CD8-positive, alpha-beta T cell (primary cell): ENCODE measurements at regions of chr5 and their contacts with region 1.

Region 1: GRCh38 chr5:139560752-139561654 is at the start of gene UBE2D2:
- DNase-seq: peak; percentile 96 to 99 (median 97)
- ATAC-seq: peak; percentile 84
- H3K4me3 ChIP-seq: peak within 1 kb of the TSS; percentile 84 to 91
- H3K4me3 Mint-ChIP-seq: peak within 1 kb of the TSS; percentile 93
- H3K27ac ChIP-seq: peak within 1 kb of the TSS; percentile 87 to 89
- H3K27ac Mint-ChIP-seq: peak within 1 kb of the TSS; percentile 97
- H3K4me1 ChIP-seq: peaks cover 30% of the 10 kb centered on the region
- H3K4me1 Mint-ChIP-seq: peaks cover 35% of the 10 kb centered on the region
- H3K27me3 ChIP-seq: no peaks in the 10 kb centered on the region
- H3K27me3 Mint-ChIP-seq: no peaks in the 10 kb centered on the region
- CTCF ChIP-seq: no peak
- total RNA-seq, gene UBE2D2: 180 TPM

Region 2: GRCh38 chr5:138464008-138464387 is 1097.0 kb before region 1 on chr5:
- CTCF ChIA-PET with region 1: no interaction called
- POLR2A ChIA-PET with region 1: no interaction called
- intact Hi-C with region 1: loop called in 1 of 2 experiments (anchors 5 kb)
- DNase-seq: peak; percentile 85 to 98 (median 93)
- ATAC-seq: peak; percentile 47
- H3K4me3 ChIP-seq: peak overlapping the region; percentile 91 to 97
- H3K4me3 Mint-ChIP-seq: peak overlapping the region; percentile 91
- H3K27ac ChIP-seq: peak overlapping the region; percentile 79 to 100
- H3K27ac Mint-ChIP-seq: peak overlapping the region; percentile 93
- H3K4me1 ChIP-seq: peaks cover 51% of the 10 kb centered on the region
- H3K4me1 Mint-ChIP-seq: peaks cover 48% of the 10 kb centered on the region
- H3K27me3 ChIP-seq: no peaks in the 10 kb centered on the region
- H3K27me3 Mint-ChIP-seq: no peaks in the 10 kb centered on the region
- CTCF ChIP-seq: peak; percentile 87

Region 3: GRCh38 chr5:139439013-139439903 is 121.7 kb before region 1 on chr5 and contains the start of gene DNAJC18:
- CTCF ChIA-PET with region 1: interaction called, 3 read pairs
- POLR2A ChIA-PET with region 1: no interaction called
- intact Hi-C with region 1: loop called (anchors 1 to 2 kb)
- DNase-seq: peak; percentile 78 to 93 (median 90)
- ATAC-seq: peak; percentile 88
- H3K4me3 ChIP-seq: peak within 1 kb of the TSS; percentile 95 to 98
- H3K4me3 Mint-ChIP-seq: peak within 1 kb of the TSS; percentile 98
- H3K27ac ChIP-seq: peak within 1 kb of the TSS; percentile 97 to 98
- H3K27ac Mint-ChIP-seq: peak within 1 kb of the TSS; percentile 99
- H3K4me1 ChIP-seq: peaks cover 24% of the 10 kb centered on the region
- H3K4me1 Mint-ChIP-seq: peaks cover 33% of the 10 kb centered on the region
- H3K27me3 ChIP-seq: no peaks in the 10 kb centered on the region
- H3K27me3 Mint-ChIP-seq: no peaks in the 10 kb centered on the region
- CTCF ChIP-seq: no peak
- total RNA-seq, gene DNAJC18: 8.0 to 10.2 TPM

Region 4: DNA sequence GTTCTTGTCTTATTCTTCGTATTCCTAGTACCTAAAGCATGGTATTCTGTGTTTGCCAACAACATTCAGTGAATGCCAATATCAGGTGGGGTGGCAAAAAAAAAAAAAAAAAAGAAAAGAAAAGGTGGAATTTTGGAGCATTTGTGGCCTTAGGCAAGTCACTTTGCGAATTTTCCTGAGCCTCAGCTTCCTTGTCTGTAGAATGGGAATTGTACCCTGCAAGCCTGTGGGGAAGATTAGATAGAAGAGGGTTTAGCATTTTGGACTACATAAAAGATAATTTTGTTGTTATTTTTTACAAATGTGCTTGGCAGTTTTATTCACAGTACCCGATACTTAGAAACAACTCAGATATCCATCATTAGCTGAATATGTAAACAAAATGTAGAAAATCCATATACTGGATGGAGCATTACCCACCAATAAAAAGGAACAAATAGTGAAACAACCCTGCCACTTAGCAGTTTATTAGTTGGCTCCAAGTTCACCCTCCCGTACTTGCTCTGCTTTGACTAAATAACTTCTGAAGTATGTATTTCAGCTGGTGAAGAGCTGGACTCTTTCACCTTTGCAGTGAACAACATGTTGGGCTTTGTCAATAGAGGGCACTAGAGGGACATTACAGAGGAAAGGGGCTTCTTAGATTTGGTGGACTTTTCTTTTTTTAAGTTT is 13.8 kb after region 1 on chr5:
- CTCF ChIA-PET with region 1: interaction called, 29 read pairs
- POLR2A ChIA-PET with region 1: interaction called, 19 read pairs
- intact Hi-C with region 1: loop called (anchors 1 kb)
- DNase-seq: peak in 5 of 9 experiments; percentile 16 to 76 (median 45)
- ATAC-seq: peak; percentile 42
- H3K4me3 ChIP-seq: no peak overlapping the region
- H3K4me3 Mint-ChIP-seq: peak overlapping the region; percentile 20
- H3K27ac ChIP-seq: peak overlapping the region in 1 of 2 experiments; percentile 34
- H3K27ac Mint-ChIP-seq: peak overlapping the region; percentile 43
- H3K4me1 ChIP-seq: peaks cover 75% of the 10 kb centered on the region
- H3K4me1 Mint-ChIP-seq: peaks cover 79% of the 10 kb centered on the region
- H3K27me3 ChIP-seq: no peaks in the 10 kb centered on the region
- H3K27me3 Mint-ChIP-seq: no peaks in the 10 kb centered on the region
- CTCF ChIP-seq: peak; percentile 72

Region 5: DNA sequence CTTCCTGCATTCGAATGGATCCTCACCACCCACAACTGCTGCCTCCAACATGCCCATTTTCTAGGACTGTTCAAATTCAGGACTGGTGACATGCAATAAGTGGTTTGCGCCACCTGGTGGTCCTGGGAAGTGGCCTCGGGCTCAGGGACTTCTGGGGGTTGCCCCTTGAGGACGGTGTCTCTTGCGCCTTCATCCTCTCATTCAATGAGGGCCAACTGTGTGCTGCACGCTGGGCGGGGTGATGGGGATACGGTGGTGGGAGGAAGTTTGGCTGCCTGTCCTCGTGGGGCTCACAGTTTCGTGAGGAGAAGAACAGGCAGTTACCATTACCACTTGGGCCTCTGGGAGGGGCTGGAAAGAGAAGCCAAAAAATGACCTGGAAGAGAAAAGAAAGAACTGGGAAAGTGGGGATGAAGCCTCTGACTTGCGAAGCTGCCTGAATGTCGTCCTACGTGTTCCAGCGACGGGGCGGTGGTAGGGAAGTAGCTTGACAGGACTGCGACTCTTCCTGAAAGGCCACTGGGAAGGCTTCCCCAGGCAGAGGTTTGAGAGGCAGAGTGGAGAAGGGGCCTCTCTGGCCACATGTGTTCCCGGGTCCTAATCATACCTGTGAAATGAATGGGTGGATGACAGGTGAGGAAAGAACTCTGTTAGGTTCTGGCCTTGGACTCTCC is 283.6 kb after region 1 on chr5:
- CTCF ChIA-PET with region 1: no interaction called
- POLR2A ChIA-PET with region 1: no interaction called
- intact Hi-C with region 1: loop called in 1 of 2 experiments (anchors 10 kb)
- DNase-seq: peak; percentile 50 to 83 (median 77)
- ATAC-seq: peak; percentile 24
- H3K4me3 ChIP-seq: no peak overlapping the region
- H3K4me3 Mint-ChIP-seq: no peak overlapping the region
- H3K27ac ChIP-seq: no peak overlapping the region
- H3K27ac Mint-ChIP-seq: no peak overlapping the region
- H3K4me1 ChIP-seq: no peaks in the 10 kb centered on the region
- H3K4me1 Mint-ChIP-seq: peaks cover 15% of the 10 kb centered on the region
- H3K27me3 ChIP-seq: no peaks in the 10 kb centered on the region
- H3K27me3 Mint-ChIP-seq: peaks cover 18% of the 10 kb centered on the region
- CTCF ChIP-seq: peak; percentile 76